GM12878 (cell line): ENCODE measurements at regions of chr7 and their contacts with region 1.

Region 1: GRCh38 chr7:123823898-123824753 is 20.8 kb upstream of the HYAL4 start:
- DNase-seq: peak; percentile 42
- ATAC-seq: peak; percentile 97
- H3K4me3 ChIP-seq: no peak overlapping the region
- H3K27ac ChIP-seq: peak overlapping the region; percentile 71
- H3K4me1 ChIP-seq: peaks cover 11% of the 10 kb centered on the region
- H3K27me3 ChIP-seq: no peaks in the 10 kb centered on the region
- CTCF ChIP-seq: no peak
- EP300 ChIP-seq: peak in 1 of 2 experiments; percentile 56; a peak in 2 of 4 replicates
- POLR2A ChIP-seq: no peak
- RAD21 ChIP-seq: no peak

Region 2: DNA sequence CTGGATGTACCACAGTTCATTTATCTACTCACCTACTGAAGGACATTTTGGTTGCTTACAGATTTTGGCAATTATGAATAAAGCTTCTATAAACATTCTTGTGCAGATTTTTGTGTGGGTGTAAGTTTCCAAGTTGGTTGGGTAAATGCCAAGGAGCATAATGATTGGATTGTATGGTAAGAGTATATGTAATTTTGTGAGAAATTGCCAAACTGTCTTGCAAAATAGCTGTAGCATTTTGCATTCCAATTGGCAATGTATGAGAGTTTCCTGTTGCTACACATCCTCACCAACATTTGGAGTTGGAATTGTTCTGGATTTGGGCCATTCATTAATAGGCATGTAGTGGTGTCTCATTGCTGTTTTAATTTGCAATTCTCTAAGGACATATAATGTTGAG is 13.1 kb before region 1 on chr7:
- CTCF ChIA-PET with region 1: interaction called, 3 read pairs
- POLR2A ChIA-PET with region 1: no interaction called
- RAD21 ChIA-PET with region 1: interaction called, 5 read pairs
- SMC1A ChIA-PET with region 1: interaction called, 10 read pairs
- in situ Hi-C with region 1: no loop called
- intact Hi-C with region 1: no loop called
- DNase-seq: no peak
- ATAC-seq: no peak
- H3K4me3 ChIP-seq: no peak overlapping the region
- H3K27ac ChIP-seq: no peak overlapping the region
- H3K4me1 ChIP-seq: no peaks in the 10 kb centered on the region
- H3K27me3 ChIP-seq: no peaks in the 10 kb centered on the region
- CTCF ChIP-seq: no peak
- EP300 ChIP-seq: no peak
- POLR2A ChIP-seq: no peak
- RAD21 ChIP-seq: no peak

Region 3: GRCh38 chr7:123846216-123846891 is 22.2 kb after region 1 on chr7:
- CTCF ChIA-PET with region 1: no interaction called
- POLR2A ChIA-PET with region 1: interaction called, 4 read pairs
- RAD21 ChIA-PET with region 1: interaction called, 11 read pairs
- SMC1A ChIA-PET with region 1: interaction called, 26 read pairs
- in situ Hi-C with region 1: no loop called
- intact Hi-C with region 1: no loop called
- DNase-seq: peak; percentile 7
- ATAC-seq: peak; percentile 93
- H3K4me3 ChIP-seq: no peak overlapping the region
- H3K27ac ChIP-seq: no peak overlapping the region
- H3K4me1 ChIP-seq: no peaks in the 10 kb centered on the region
- H3K27me3 ChIP-seq: no peaks in the 10 kb centered on the region
- CTCF ChIP-seq: no peak
- EP300 ChIP-seq: no peak
- POLR2A ChIP-seq: no peak
- RAD21 ChIP-seq: no peak